PC-3 (cell line): ENCODE measurements at regions of chr17 and their contacts with region 1.

Region 1: GRCh38 chr17:56545106-56545505 is 48.4 kb upstream of the NOG start:
- DNase-seq: no peak
- ATAC-seq: no peak
- H3K4me3 ChIP-seq: no peak overlapping the region
- H3K27ac ChIP-seq: no peak overlapping the region
- H3K4me1 ChIP-seq: no peaks in the 10 kb centered on the region
- H3K27me3 ChIP-seq: peaks cover 14% of the 10 kb centered on the region; the same call in 1 of the 2 replicates
- CTCF ChIP-seq: no peak

Region 2: GRCh38 chr17:56499799-56500388 is 45.2 kb before region 1 on chr17:
- CTCF ChIA-PET with region 1: no interaction called
- POLR2A ChIA-PET with region 1: interaction called, 10 read pairs
- intact Hi-C with region 1: no loop called
- DNase-seq: peak; percentile 73
- ATAC-seq: no peak; the same call in 1 of the 2 replicates
- H3K4me3 ChIP-seq: no peak overlapping the region
- H3K27ac ChIP-seq: no peak overlapping the region
- H3K4me1 ChIP-seq: 0 out of 2 replicates have a peak, but pooled peaks cover 1% of the 10 kb centered on the region
- H3K27me3 ChIP-seq: peaks cover 32% of the 10 kb centered on the region
- CTCF ChIP-seq: peak; percentile 86

Region 3: DNA sequence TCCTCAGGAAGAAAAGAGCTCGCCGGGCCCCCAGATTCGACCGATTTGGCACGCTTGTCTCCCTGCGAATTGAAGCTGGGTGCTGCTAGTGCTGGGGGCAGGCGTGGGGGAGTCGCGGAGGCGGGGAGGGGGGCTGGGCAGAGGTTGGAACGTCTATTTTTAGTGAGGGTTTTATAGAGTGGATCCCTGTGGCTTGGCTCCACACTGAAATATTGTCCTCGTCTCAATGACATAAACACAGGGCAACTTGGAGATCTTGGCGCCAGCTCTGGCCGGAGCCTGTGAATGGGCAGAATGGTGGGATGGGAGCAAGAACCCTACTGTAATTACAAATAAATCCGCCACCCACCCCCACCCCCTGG is 32.7 kb after region 1 on chr17:
- CTCF ChIA-PET with region 1: no interaction called
- POLR2A ChIA-PET with region 1: no interaction called
- intact Hi-C with region 1: no loop called
- DNase-seq: no peak
- ATAC-seq: no peak
- H3K4me3 ChIP-seq: no peak overlapping the region
- H3K27ac ChIP-seq: no peak overlapping the region
- H3K4me1 ChIP-seq: no peaks in the 10 kb centered on the region
- H3K27me3 ChIP-seq: peaks cover 69% of the 10 kb centered on the region
- CTCF ChIP-seq: no peak